ENCODE measurements at regions of chr11 and their contacts with region 1.

Region 1: GRCh38 chr11:66616379-66617154 is at the start of gene RBM14:
- DNase-seq: peak; percentile 99
- ATAC-seq: peak; percentile 92
- H3K4me3 Mint-ChIP-seq: peak within 1 kb of the TSS; percentile 98
- H3K27ac Mint-ChIP-seq: peak within 1 kb of the TSS; percentile 99
- H3K4me1 Mint-ChIP-seq: peaks cover 36% of the 10 kb centered on the region
- H3K27me3 Mint-ChIP-seq: no peaks in the 10 kb centered on the region
- total RNA-seq, gene RBM14: 168 to 182 TPM

Region 2: GRCh38 chr11:66545701-66546367 is 70.7 kb before region 1 on chr11 and contains the start of gene ZDHHC24:
- CTCF ChIA-PET with region 1: interaction called, 13 read pairs
- POLR2A ChIA-PET with region 1: interaction called, 3 read pairs
- DNase-seq: peak; percentile 91
- ATAC-seq: peak; percentile 88
- H3K4me3 Mint-ChIP-seq: peak within 1 kb of the TSS; percentile 83
- H3K27ac Mint-ChIP-seq: peak within 1 kb of the TSS; percentile 78
- H3K4me1 Mint-ChIP-seq: peaks cover 38% of the 10 kb centered on the region
- H3K27me3 Mint-ChIP-seq: peaks cover 19% of the 10 kb centered on the region
- total RNA-seq, gene ZDHHC24: 15.5 to 15.9 TPM

Region 3: DNA sequence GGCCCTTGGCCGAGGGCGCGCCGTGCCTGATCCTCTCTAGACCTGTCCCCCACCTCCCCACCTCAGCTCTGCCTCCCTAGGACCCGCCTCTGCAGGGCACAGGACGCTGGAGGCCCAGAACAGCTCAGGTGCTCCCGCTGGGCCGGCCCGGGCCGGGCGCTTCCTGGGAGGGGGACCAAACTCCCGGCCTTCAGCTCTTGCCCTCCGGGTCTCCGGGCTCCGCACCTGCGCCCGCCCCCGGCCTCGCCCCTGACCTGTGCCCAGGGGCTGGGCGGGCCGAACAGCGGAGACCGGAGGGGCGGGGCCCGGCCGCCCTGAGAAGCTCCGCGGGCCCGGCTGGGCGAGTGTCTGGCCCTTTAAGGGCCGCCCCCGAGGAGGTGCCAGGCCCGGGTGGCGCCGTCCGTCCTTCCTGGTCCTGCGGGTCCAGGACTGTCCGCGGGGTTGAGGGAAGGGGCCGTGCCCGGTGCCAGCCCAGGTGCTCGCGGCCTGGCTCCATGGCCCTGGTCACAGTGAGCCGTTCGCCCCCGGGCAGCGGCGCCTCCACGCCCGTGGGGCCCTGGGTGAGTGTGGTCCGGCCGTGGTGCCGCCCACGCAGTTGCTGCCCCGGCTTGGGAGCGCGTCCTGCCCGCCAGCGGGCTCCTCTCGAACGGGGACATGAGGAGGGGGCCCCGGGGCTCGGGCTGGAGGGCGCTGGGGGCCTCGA is 686.7 kb after region 1 on chr11 and contains the start of gene SSH3:
- CTCF ChIA-PET with region 1: no interaction called
- POLR2A ChIA-PET with region 1: no interaction called
- DNase-seq: peak; percentile 55
- ATAC-seq: peak; percentile 84
- H3K4me3 Mint-ChIP-seq: peak within 1 kb of the TSS; percentile 55
- H3K27ac Mint-ChIP-seq: peak within 1 kb of the TSS; percentile 43
- H3K4me1 Mint-ChIP-seq: peaks cover 19% of the 10 kb centered on the region
- H3K27me3 Mint-ChIP-seq: no peaks in the 10 kb centered on the region
- total RNA-seq, gene SSH3: 12.0 to 13.0 TPM

Measured in activated CD8-positive, alpha-beta T cell treated with anti-CD3 and anti-CD28 coated beads, Interleukin-2, amount 10 ng/mL, durations not matched to agents 7 days and 5 days (primary cell).